ENCODE measurements at regions of chr3 and their contacts with region 1.

Region 1: DNA sequence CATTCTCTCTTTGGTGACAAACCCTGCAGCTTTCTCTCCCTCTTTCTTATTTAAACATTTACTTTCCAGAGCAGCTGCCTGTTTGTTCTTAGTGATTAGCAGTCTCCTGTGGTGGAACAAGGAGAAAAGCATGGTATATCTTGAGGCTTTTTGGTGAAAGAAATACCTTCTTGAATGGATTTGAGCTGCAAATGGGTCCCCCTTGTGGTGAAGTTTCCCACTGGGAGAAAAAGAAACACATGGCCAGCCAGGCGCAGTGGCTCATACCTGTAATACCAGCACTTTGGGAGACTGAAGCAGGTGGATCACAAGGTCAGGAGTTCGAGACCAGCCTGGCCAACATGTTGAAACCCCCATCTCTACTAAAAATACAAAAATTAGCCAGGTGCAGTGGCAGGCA is 48.3 kb upstream of the ACP3 start:
- DNase-seq: no peak
- ATAC-seq: no peak
- H3K4me3 ChIP-seq: no peak overlapping the region
- H3K27ac ChIP-seq: no peak overlapping the region
- H3K4me1 ChIP-seq: no peaks in the 10 kb centered on the region
- H3K27me3 ChIP-seq: no peaks in the 10 kb centered on the region
- CTCF ChIP-seq: peak in 6 of 9 donors; percentile 14 to 47 (median 24)

Region 2: DNA sequence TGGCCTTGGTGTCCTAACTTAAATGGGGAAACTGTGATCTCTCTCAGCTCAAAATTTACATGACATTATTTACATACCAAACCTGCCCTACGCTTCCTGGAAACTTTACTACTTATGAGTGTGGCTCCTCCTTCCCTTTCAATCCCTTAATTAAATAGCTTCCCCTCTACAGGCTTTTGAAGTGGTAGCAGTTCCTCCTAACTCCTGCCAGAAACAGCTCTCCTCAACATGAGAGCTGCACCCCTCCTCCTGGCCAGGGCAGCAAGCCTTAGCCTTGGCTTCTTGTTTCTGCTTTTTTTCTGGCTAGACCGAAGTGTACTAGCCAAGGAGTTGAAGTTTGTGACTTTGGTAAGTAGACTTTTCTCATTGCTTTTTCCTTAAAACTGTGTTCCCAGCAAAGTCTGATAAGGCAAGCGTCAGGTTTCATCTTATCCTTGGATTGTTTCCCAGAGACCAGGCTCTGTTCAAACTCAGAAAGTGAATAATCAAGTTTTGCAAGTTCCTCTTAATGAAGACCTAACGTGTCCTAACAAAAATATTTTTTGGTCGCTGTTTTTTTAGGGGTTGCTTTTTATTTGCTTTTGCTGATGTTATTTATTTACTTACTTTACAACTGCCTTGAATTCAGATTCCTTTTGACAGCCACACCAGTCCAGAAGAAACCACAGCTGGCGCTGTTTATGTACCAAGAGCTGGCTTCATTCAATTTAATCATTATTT is 48.4 kb after region 1 on chr3 and contains the start of gene ACP3:
- intact Hi-C with region 1: loop called in 1 of 10 experiments (anchors 10 kb)
- DNase-seq: peak; percentile 34 to 40
- ATAC-seq: peak; percentile 72 to 94 (median 88)
- H3K4me3 ChIP-seq: peak within 1 kb of the TSS in 4 of 10 donors; percentile 22 to 35 (median 24)
- H3K27ac ChIP-seq: peak within 1 kb of the TSS in 7 of 10 donors; percentile 20 to 84 (median 28)
- H3K4me1 ChIP-seq: peaks cover 0 to 29% (median 8%) of the 10 kb centered on the region in 9 donors
- H3K27me3 ChIP-seq: no peaks in the 10 kb centered on the region
- CTCF ChIP-seq: no peak
- total RNA-seq, gene ACP3: 0.09 to 3.3 (median 0.91) TPM in 8 of 10 donors, not detected in the others

Region 3: GRCh38 chr3:132343018-132343612 is 74.2 kb after region 1 on chr3:
- intact Hi-C with region 1: loop called in 1 of 10 experiments (anchors 5 kb)
- DNase-seq: peak in 1 of 2 donors; percentile 52
- ATAC-seq: peak in 5 of 8 donors; percentile 56 to 69 (median 65)
- H3K4me3 ChIP-seq: peak overlapping the region in 1 of 10 donors; percentile 12
- H3K27ac ChIP-seq: no peak overlapping the region
- H3K4me1 ChIP-seq: peaks cover 0 to 25% (median 0%) of the 10 kb centered on the region in 9 donors
- H3K27me3 ChIP-seq: no peaks in the 10 kb centered on the region
- CTCF ChIP-seq: peak; percentile 50 to 82 (median 75)